ENCODE measurements at regions of chr5 and their contacts with region 1.

Region 1: GRCh38 chr5:136212252-136212721 is 19.3 kb upstream of the SMIM32 start:
- DNase-seq: peak; percentile 67
- H3K4me3 ChIP-seq: no peak overlapping the region
- H3K27ac ChIP-seq: no peak overlapping the region
- H3K4me1 ChIP-seq: no peaks in the 10 kb centered on the region
- H3K27me3 ChIP-seq: no peaks in the 10 kb centered on the region
- CTCF ChIP-seq: peak; percentile 83 to 90 (median 87)
- EP300 ChIP-seq: no peak
- POLR2A ChIP-seq: no peak

Region 2: DNA sequence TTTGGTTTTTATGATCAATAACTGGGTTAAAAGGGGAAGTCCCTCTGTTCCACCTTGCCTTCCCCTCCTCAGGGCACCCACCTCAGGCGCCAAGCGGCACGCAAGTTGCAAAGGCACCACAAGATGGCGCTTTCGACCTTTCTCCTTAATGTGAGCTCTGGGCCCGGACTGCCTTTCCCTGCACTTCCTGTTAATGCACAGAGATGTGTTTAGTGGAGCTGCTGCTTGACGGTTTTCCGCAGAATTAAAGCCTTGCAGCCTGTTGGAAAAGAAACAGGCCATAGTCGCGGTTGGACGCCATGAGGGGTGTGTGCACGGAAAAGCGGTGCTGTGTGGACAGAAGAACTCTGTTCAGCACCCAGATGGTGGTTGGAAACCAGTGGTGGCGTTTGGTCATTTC is 651.4 kb before region 1 on chr5:
- in situ Hi-C with region 1: loop called in 1 of 4 experiments (anchors 25 kb)
- intact Hi-C with region 1: no loop called
- DNase-seq: peak; percentile 79
- H3K4me3 ChIP-seq: no peak overlapping the region
- H3K27ac ChIP-seq: no peak overlapping the region
- H3K4me1 ChIP-seq: no peaks in the 10 kb centered on the region
- H3K27me3 ChIP-seq: peaks cover 29% of the 10 kb centered on the region
- CTCF ChIP-seq: peak; percentile 74 to 83 (median 76)
- EP300 ChIP-seq: no peak
- POLR2A ChIP-seq: no peak

Region 3: GRCh38 chr5:135887351-135887864 is 324.9 kb before region 1 on chr5:
- in situ Hi-C with region 1: loop called (anchors 5 to 10 kb)
- intact Hi-C with region 1: loop called (anchors 2 kb)
- DNase-seq: peak; percentile 69
- H3K4me3 ChIP-seq: no peak overlapping the region
- H3K27ac ChIP-seq: no peak overlapping the region
- H3K4me1 ChIP-seq: peaks cover 0 to 4% (median 1%) of the 10 kb centered on the region in 4 donors
- H3K27me3 ChIP-seq: no peaks in the 10 kb centered on the region
- CTCF ChIP-seq: peak; percentile 76 to 86 (median 79)
- EP300 ChIP-seq: no peak
- POLR2A ChIP-seq: no peak

Region 4: DNA sequence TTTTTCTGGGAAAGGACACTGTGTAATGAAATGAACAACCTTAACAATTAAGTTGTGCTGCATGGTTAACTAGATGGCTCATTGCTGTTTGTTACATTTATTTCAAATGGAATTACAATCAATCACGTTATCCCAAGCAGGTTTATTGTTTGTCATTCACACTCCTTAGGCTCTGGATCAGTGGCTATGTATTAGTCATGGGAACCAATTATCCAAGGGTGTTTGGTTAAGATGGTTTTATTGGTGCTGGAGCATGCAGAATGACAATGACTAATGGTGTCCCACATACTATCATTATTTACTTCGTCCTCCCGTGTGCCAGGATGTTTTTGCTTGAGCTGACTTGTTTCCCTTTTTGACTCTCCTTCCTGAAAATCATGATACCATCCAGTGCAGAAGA is 163.6 kb after region 1 on chr5:
- in situ Hi-C with region 1: no loop called
- intact Hi-C with region 1: no loop called
- DNase-seq: no peak
- H3K4me3 ChIP-seq: no peak overlapping the region
- H3K27ac ChIP-seq: no peak overlapping the region
- H3K4me1 ChIP-seq: no peaks in the 10 kb centered on the region
- H3K27me3 ChIP-seq: peaks cover 3% of the 10 kb centered on the region
- CTCF ChIP-seq: no peak
- EP300 ChIP-seq: no peak
- POLR2A ChIP-seq: no peak

Region 5: DNA sequence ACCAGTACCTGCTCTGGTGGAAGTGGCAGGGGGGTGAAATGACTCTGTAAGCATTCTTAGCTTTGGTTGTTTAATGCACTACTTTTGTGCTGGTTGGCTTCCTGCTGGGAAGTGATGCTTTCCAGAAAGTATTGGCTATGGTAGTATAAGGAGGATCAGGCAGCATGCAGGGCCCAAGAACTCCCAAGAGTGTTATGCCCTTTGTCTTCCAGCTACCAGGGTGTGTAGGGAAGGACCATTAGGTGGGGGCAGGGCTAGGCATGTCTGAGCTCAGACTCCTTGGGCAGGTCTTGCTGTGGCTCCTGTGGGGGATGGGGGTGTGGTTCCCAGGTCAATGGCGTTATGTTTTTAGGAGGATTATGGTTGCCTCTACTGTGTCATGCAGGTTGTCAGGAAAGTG is 288.8 kb after region 1 on chr5:
- in situ Hi-C with region 1: no loop called
- intact Hi-C with region 1: no loop called
- DNase-seq: no peak
- H3K4me3 ChIP-seq: no peak overlapping the region
- H3K27ac ChIP-seq: no peak overlapping the region
- H3K4me1 ChIP-seq: no peaks in the 10 kb centered on the region
- H3K27me3 ChIP-seq: no peaks in the 10 kb centered on the region
- CTCF ChIP-seq: no peak
- EP300 ChIP-seq: no peak
- POLR2A ChIP-seq: no peak

Measured in transverse colon (tissue), 4 donors.